B cell (primary cell): ENCODE measurements at regions of chr13 and their contacts with region 1.

Region 1: DNA sequence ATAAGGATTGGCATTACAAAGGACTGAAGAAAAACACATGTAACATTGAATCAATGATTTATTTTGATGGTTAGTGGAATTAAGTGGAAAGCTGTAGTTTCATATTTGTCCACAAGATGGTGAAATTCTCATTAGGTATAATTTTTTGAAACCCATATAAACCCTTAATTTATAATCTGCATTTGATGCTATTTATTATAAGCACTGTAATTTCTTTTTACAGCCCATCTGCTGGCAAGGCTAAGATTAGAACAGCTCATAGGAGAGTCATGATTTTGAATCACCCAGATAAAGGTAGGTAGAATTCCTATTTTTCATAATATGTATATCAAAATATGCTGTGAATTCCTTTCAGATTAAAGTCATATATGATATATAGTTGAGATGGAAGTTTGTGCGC is 62.2 kb downstream of the DNAJC15 start:
- DNase-seq: peak; percentile 41
- ATAC-seq: no peak
- H3K4me3 ChIP-seq: no peak overlapping the region
- H3K4me3 Mint-ChIP-seq: no peak overlapping the region
- H3K27ac ChIP-seq: no peak overlapping the region
- H3K27ac Mint-ChIP-seq: no peak overlapping the region
- H3K4me1 ChIP-seq: peaks cover 0 to 6% of the 10 kb centered on the region in 2 donors
- H3K4me1 Mint-ChIP-seq: peaks cover 18% of the 10 kb centered on the region
- H3K27me3 ChIP-seq: no peaks in the 10 kb centered on the region
- H3K27me3 Mint-ChIP-seq: no peaks in the 10 kb centered on the region
- CTCF ChIP-seq: peak; percentile 78

Region 2: GRCh38 chr13:42969558-42970172 is 115.9 kb before region 1 on chr13:
- CTCF ChIA-PET with region 1: interaction called, 33 read pairs
- POLR2A ChIA-PET with region 1: no interaction called
- intact Hi-C with region 1: loop called (anchors 2 kb)
- DNase-seq: peak; percentile 80
- ATAC-seq: peak; percentile 80
- H3K4me3 ChIP-seq: no peak overlapping the region
- H3K4me3 Mint-ChIP-seq: no peak overlapping the region
- H3K27ac ChIP-seq: no peak overlapping the region
- H3K27ac Mint-ChIP-seq: peak overlapping the region; percentile 12
- H3K4me1 ChIP-seq: peaks cover 22 to 29% of the 10 kb centered on the region in 2 donors
- H3K4me1 Mint-ChIP-seq: peaks cover 31% of the 10 kb centered on the region
- H3K27me3 ChIP-seq: no peaks in the 10 kb centered on the region
- H3K27me3 Mint-ChIP-seq: no peaks in the 10 kb centered on the region
- CTCF ChIP-seq: peak; percentile 88

Region 3: DNA sequence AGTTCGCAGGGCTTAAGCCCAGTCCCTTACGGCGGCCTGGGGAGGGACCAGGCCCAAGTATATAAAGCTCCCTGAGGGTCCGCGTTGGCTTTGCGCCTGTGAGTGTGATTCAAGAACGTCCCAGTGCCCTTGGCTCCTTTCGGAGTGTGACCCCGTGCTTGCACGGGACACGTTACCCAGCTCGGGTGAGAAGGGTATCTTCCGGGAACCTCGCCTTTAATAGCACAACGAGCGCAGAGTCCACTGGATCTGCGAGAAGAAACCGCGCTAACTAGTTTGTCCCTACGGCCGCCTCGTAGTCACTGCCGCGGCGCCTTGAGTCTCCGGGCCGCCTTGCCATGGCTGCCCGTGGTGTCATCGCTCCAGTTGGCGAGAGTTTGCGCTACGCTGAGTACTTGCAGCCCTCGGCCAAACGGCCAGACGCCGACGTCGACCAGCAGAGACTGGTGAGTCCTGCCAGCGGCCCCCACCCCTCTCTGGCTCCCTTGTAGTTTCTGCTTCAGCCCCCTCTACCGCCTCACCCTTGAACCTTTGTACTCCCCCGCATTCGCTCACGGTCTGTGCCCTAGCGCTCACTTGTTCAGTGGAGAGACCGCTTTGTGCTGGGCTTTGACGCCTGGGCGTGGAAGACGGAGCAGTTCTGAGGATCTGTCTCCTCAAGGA is 62.1 kb before region 1 on chr13 and contains the start of gene DNAJC15:
- CTCF ChIA-PET with region 1: interaction called, 6 read pairs
- POLR2A ChIA-PET with region 1: interaction called, 5 read pairs
- intact Hi-C with region 1: loop called (anchors 10 kb)
- DNase-seq: peak; percentile 92
- ATAC-seq: peak; percentile 90
- H3K4me3 ChIP-seq: peak within 1 kb of the TSS; percentile 67 to 89 (median 70)
- H3K4me3 Mint-ChIP-seq: peak within 1 kb of the TSS; percentile 96
- H3K27ac ChIP-seq: peak within 1 kb of the TSS; percentile 81 to 87
- H3K27ac Mint-ChIP-seq: peak within 1 kb of the TSS; percentile 97
- H3K4me1 ChIP-seq: peaks cover 25 to 26% of the 10 kb centered on the region in 2 donors
- H3K4me1 Mint-ChIP-seq: peaks cover 41% of the 10 kb centered on the region
- H3K27me3 ChIP-seq: no peaks in the 10 kb centered on the region
- H3K27me3 Mint-ChIP-seq: no peaks in the 10 kb centered on the region
- CTCF ChIP-seq: peak; percentile 25
- total RNA-seq, gene DNAJC15: 13.5 and 15.2 TPM in 2 replicates

Region 4: DNA sequence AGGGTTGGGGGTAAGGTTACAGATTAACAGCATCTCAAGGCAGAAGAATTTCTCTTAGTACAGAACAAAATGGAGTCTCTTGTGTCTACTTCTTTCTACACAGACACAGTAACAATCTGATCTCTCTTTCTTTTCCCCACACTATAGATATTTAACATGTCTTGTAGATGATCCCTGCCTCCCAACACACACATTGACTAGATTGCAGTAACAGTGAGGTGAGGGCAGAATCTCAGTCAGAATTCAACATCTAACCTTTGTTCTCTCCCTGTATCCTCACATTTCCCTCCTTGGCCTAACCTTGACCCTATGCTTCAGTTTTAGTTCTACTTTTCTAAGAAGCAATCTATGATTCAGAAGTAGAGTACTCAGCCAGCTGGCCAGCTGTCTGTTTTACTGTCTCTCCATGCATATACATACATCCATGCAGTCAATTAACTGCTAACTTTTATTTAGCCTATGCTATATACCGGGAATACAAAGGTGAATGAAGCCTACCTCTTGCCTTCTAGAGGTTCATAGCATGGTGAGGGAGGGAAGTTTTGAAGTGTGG is 44.1 kb before region 1 on chr13:
- CTCF ChIA-PET with region 1: interaction called, 4 read pairs
- POLR2A ChIA-PET with region 1: no interaction called
- intact Hi-C with region 1: loop called (anchors 5 kb)
- DNase-seq: no peak
- ATAC-seq: peak; percentile 24
- H3K4me3 ChIP-seq: no peak overlapping the region
- H3K4me3 Mint-ChIP-seq: peak overlapping the region; percentile 52
- H3K27ac ChIP-seq: peak overlapping the region in 1 of 2 donors; percentile 38
- H3K27ac Mint-ChIP-seq: peak overlapping the region; percentile 83
- H3K4me1 ChIP-seq: peaks cover 50 to 55% of the 10 kb centered on the region in 2 donors
- H3K4me1 Mint-ChIP-seq: peaks cover 71% of the 10 kb centered on the region
- H3K27me3 ChIP-seq: no peaks in the 10 kb centered on the region
- H3K27me3 Mint-ChIP-seq: no peaks in the 10 kb centered on the region
- CTCF ChIP-seq: no peak

Region 5: GRCh38 chr13:43074824-43075510 is 10.6 kb before region 1 on chr13:
- CTCF ChIA-PET with region 1: interaction called, 17 read pairs
- POLR2A ChIA-PET with region 1: no interaction called
- intact Hi-C with region 1: no loop called
- DNase-seq: peak; percentile 15
- ATAC-seq: no peak
- H3K4me3 ChIP-seq: no peak overlapping the region
- H3K4me3 Mint-ChIP-seq: peak overlapping the region; percentile 38
- H3K27ac ChIP-seq: no peak overlapping the region
- H3K27ac Mint-ChIP-seq: peak overlapping the region; percentile 2
- H3K4me1 ChIP-seq: peaks cover 15 to 31% of the 10 kb centered on the region in 2 donors
- H3K4me1 Mint-ChIP-seq: peaks cover 48% of the 10 kb centered on the region
- H3K27me3 ChIP-seq: no peaks in the 10 kb centered on the region
- H3K27me3 Mint-ChIP-seq: no peaks in the 10 kb centered on the region
- CTCF ChIP-seq: no peak

Region 6: GRCh38 chr13:43804461-43805070 is 719.0 kb after region 1 on chr13:
- CTCF ChIA-PET with region 1: interaction called, 4 read pairs
- POLR2A ChIA-PET with region 1: no interaction called
- intact Hi-C with region 1: loop called (anchors 5 kb)
- DNase-seq: peak; percentile 59
- ATAC-seq: no peak
- H3K4me3 ChIP-seq: no peak overlapping the region
- H3K4me3 Mint-ChIP-seq: no peak overlapping the region
- H3K27ac ChIP-seq: no peak overlapping the region
- H3K27ac Mint-ChIP-seq: no peak overlapping the region
- H3K4me1 ChIP-seq: no peaks in the 10 kb centered on the region
- H3K4me1 Mint-ChIP-seq: no peaks in the 10 kb centered on the region
- H3K27me3 ChIP-seq: no peaks in the 10 kb centered on the region
- H3K27me3 Mint-ChIP-seq: peaks cover 13% of the 10 kb centered on the region
- CTCF ChIP-seq: peak; percentile 85

Region 7: GRCh38 chr13:43878892-43879754 is 793.6 kb after region 1 on chr13 and contains the start of gene CCDC122:
- CTCF ChIA-PET with region 1: no interaction called
- POLR2A ChIA-PET with region 1: no interaction called
- intact Hi-C with region 1: loop called (anchors 2 kb)
- DNase-seq: peak; percentile 89
- ATAC-seq: peak; percentile 79
- H3K4me3 ChIP-seq: peak within 1 kb of the TSS; percentile 36 to 78 (median 75)
- H3K4me3 Mint-ChIP-seq: peak within 1 kb of the TSS; percentile 88
- H3K27ac ChIP-seq: peak within 1 kb of the TSS; percentile 76 to 92
- H3K27ac Mint-ChIP-seq: peak within 1 kb of the TSS; percentile 94
- H3K4me1 ChIP-seq: peaks cover 20 to 22% of the 10 kb centered on the region in 2 donors
- H3K4me1 Mint-ChIP-seq: peaks cover 31% of the 10 kb centered on the region
- H3K27me3 ChIP-seq: no peaks in the 10 kb centered on the region
- H3K27me3 Mint-ChIP-seq: no peaks in the 10 kb centered on the region
- CTCF ChIP-seq: no peak
- total RNA-seq, gene CCDC122: 10.7 and 12.1 TPM in 2 replicates

Region 8: DNA sequence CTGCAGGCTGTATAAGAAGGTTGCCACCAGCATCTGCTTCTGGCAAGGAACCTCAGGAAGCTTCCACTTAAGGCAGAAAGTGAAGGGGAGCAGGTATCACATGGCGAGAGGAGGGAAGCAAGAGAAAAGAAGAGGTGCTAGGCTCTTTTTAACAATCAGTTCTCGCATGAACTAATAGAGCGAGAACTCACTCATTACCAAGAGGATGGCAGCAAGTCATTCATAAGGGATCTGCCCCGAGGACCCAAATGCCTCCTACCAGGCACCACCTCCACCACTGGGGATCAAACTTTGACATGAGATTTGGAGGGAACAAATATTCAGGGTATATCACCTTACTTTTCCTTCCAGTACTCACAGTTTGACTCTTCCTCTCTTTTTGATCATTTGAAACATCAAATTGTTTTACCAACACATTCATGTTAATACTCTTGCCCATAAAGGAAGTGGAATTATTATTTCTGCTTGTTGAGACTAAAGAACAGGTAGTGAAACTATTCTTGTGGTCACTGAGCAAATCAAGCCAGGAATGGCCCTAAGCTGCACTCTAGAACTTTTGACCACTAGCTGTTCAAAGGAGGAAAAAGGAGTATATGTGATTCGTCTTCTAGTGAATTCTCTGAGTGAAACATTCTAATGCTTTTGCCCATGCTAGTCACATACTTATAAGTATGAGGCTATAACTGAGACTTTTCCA is 839.2 kb after region 1 on chr13:
- CTCF ChIA-PET with region 1: no interaction called
- POLR2A ChIA-PET with region 1: no interaction called
- intact Hi-C with region 1: no loop called
- DNase-seq: peak; percentile 10
- ATAC-seq: no peak
- H3K4me3 ChIP-seq: no peak overlapping the region
- H3K4me3 Mint-ChIP-seq: no peak overlapping the region
- H3K27ac ChIP-seq: no peak overlapping the region
- H3K27ac Mint-ChIP-seq: no peak overlapping the region
- H3K4me1 ChIP-seq: peaks cover 4 to 6% of the 10 kb centered on the region in 2 donors
- H3K4me1 Mint-ChIP-seq: peaks cover 7% of the 10 kb centered on the region
- H3K27me3 ChIP-seq: peaks cover 0 to 16% (median 10%) of the 10 kb centered on the region in 4 experiments
- H3K27me3 Mint-ChIP-seq: peaks cover 42% of the 10 kb centered on the region
- CTCF ChIP-seq: no peak